ENCODE measurements at regions of chr21 and their contacts with region 1.

Region 1: GRCh38 chr21:34857874-34858273 is 189.1 kb downstream of the CLIC6 start:
- DNase-seq: no peak
- H3K4me3 ChIP-seq: no peak overlapping the region
- H3K27ac ChIP-seq: no peak overlapping the region
- H3K4me1 ChIP-seq: no peaks in the 10 kb centered on the region
- H3K27me3 ChIP-seq: no peaks in the 10 kb centered on the region
- CTCF ChIP-seq: peak; percentile 21 to 38
- POLR2A ChIP-seq: no peak

Region 2: DNA sequence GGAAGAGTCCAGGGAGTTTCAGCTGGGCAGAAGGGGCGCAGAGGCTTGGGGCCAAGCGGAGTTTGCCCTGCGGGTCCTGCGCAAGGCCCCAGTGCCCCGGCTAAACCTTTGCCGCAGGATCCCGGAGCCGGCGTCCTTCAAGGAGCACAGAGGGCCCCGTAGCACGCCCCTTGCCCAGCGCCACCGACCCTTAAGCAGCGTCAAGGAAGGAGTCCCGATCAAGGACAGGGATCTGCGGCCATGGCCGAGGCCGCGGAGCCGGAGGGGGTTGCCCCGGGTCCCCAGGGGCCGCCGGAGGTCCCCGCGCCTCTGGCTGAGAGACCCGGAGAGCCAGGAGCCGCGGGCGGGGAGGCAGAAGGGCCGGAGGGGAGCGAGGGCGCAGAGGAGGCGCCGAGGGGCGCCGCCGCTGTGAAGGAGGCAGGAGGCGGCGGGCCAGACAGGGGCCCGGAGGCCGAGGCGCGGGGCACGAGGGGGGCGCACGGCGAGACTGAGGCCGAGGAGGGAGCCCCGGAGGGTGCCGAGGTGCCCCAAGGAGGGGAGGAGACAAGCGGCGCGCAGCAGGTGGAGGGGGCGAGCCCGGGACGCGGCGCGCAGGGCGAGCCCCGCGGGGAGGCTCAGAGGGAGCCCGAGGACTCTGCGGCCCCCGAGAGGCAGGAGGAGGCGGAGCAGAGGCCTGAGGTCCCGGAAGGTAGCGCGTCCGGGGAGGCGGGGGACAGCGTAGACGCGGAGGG is 188.6 kb before region 1 on chr21:
- CTCF ChIA-PET with region 1: no interaction called
- POLR2A ChIA-PET with region 1: no interaction called
- dilution Hi-C with region 1: no loop called
- intact Hi-C with region 1: no loop called
- DNase-seq: no peak
- H3K4me3 ChIP-seq: no peak overlapping the region
- H3K27ac ChIP-seq: no peak overlapping the region
- H3K4me1 ChIP-seq: no peaks in the 10 kb centered on the region
- H3K27me3 ChIP-seq: peaks cover 53 to 73% of the 10 kb centered on the region in 2 experiments
- CTCF ChIP-seq: no peak
- POLR2A ChIP-seq: no peak

Region 3: GRCh38 chr21:34836103-34836932 is 21.6 kb before region 1 on chr21:
- CTCF ChIA-PET with region 1: interaction called, 11 read pairs
- POLR2A ChIA-PET with region 1: no interaction called
- dilution Hi-C with region 1: no loop called
- intact Hi-C with region 1: no loop called
- DNase-seq: peak; percentile 98
- H3K4me3 ChIP-seq: peak overlapping the region in 1 of 3 experiments; percentile 3
- H3K27ac ChIP-seq: peak overlapping the region; percentile 78
- H3K4me1 ChIP-seq: peaks cover 30% of the 10 kb centered on the region
- H3K27me3 ChIP-seq: no peaks in the 10 kb centered on the region
- CTCF ChIP-seq: no peak
- POLR2A ChIP-seq: peak; percentile 26

Region 4: DNA sequence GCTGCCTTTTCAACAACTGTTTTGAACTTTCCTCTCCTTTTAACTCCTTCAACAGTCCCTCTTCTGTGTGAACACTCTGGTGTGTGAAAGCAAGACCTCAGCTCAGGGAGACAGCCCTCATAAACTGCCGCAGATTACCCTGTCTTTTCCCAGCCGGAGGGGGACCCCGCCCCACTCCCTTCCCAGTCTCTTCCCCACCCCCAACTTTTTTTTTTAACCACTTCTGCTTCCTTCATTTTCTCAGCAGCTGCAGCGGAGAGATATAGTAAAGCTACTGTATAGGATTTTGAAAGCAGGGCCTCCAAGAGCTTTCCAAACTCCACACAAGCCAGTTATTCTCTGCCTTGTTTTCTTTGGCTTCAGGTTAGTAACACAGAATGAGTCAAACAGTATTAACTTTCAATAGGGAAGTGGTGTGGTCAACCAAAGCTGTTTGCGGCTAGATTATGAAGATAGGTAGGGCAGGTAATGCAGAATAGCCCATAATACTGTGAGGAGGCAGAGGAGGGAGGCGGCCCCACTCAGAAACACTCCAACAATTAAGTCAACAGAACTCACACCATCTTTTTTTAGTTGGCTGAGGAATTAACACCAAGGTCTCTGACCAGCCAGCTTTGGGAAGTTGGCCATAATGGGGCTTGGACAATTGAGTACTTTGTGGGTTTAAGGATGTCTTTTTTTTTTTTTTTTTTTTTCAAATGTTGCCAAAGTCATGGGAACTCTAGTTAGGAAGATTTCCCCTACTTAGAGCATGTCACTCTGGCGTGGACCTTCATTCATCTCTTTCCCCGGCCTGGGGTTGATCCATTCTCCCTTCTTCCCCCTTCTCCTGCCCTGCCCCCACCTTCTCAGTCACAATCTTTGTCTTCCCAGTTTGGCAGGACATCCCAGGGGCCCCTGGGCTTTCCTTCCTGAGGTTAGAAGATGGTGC is 12.1 kb before region 1 on chr21:
- CTCF ChIA-PET with region 1: interaction called, 10 read pairs
- POLR2A ChIA-PET with region 1: no interaction called
- dilution Hi-C with region 1: no loop called
- intact Hi-C with region 1: no loop called
- DNase-seq: peak; percentile 80
- H3K4me3 ChIP-seq: no peak overlapping the region
- H3K27ac ChIP-seq: no peak overlapping the region
- H3K4me1 ChIP-seq: peaks cover 17% of the 10 kb centered on the region
- H3K27me3 ChIP-seq: no peaks in the 10 kb centered on the region
- CTCF ChIP-seq: no peak
- POLR2A ChIP-seq: no peak

Measured in endothelial cell of umbilical vein (primary cell).